ENCODE measurements at regions of chr2 and their contacts with region 1.

Region 1: DNA sequence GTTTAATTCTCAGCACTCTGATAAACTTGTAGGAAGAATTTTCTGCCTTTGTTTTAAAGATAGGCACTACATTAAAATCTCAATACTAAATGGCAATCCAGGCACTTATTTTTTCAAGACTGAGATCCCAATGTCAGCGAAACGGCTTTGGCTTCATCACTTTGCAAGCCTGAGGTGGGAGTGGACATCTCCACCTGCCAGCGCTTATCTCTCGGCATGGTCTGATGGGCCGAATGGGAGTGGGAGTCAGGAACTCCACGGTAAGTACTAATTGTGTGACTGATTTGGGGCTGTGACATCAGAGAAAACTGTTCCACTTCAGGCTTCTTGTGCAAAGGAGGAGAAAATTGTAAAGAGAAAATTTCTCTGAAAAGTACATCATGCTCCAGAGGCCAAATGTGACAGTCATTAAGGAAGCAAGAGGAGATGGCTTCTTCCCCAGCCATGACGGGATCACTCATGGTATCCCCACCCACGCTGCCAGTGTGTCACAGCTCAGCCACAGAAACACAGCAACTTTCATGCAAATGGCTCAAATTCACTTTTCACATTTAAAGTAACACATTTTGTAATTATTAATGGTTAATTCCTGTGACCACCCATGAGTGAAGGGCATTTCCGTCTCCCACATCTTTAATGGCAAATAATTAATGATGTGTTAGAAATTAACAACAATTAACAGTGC is 385.5 kb upstream of the HNRNPA3 start:
- DNase-seq: no peak
- ATAC-seq: no peak
- H3K4me3 ChIP-seq: no peak overlapping the region
- H3K27ac ChIP-seq: no peak overlapping the region
- H3K4me1 ChIP-seq: no peaks in the 10 kb centered on the region
- H3K27me3 ChIP-seq: no peaks in the 10 kb centered on the region
- CTCF ChIP-seq: no peak
- POLR2A ChIP-seq: no peak
- RAD21 ChIP-seq: no peak

Region 2: DNA sequence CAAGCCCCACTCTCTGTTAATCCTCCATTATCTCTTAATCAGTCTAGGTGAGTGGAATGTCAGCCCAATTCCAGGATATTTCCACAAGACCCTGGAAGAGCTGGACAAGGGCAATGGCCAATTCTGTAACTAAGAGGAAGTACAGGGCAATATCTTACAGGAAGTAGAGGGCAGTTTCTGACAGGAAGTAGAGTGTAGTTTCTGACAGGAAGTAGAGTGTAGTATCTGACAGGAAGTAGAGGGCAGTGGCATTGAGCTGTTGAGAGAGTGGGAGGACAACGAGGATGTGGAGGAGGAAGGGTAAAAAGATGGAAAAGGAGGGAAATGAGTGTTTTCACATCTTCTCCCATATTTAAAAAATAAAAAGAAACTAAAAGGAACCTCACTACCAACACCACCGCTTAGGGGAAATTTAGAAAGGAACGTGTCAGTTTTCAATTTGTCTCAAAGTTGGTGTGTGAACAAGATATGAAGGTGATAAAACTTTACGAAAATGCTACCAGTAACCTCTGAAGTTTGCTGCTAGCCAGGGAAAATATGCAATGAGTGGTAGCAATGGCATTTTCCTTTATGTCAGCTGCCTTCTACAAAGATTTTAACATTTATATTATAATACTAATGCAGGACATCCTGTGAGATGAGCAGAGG is 45.4 kb before region 1 on chr2:
- CTCF ChIA-PET with region 1: no interaction called
- POLR2A ChIA-PET with region 1: no interaction called
- dilution Hi-C with region 1: no loop called
- in situ Hi-C with region 1: no loop called
- intact Hi-C with region 1: no loop called
- DNase-seq: no peak
- ATAC-seq: no peak
- H3K4me3 ChIP-seq: no peak overlapping the region
- H3K27ac ChIP-seq: no peak overlapping the region
- H3K4me1 ChIP-seq: no peaks in the 10 kb centered on the region
- H3K27me3 ChIP-seq: no peaks in the 10 kb centered on the region
- CTCF ChIP-seq: no peak
- POLR2A ChIP-seq: no peak
- RAD21 ChIP-seq: no peak

Region 3: DNA sequence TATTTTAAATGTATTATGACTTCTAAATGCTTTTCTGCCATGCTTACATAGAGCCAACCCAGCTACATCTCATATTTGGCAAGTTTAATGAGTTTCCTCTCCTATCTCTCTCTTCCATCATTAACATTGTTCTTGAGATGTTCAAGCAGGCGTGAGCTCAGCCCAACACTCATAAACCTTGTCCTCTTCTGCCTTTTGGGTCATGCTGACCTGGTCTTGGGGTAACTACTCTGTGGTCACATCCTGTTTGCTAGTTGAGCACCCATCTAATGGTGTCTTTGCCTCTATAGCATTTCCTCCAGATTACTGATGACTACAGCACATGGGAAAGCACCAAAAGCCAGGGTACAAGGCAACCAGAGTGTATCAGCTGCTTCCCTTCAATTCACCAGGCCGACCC is 18.6 kb after region 1 on chr2:
- CTCF ChIA-PET with region 1: no interaction called
- POLR2A ChIA-PET with region 1: no interaction called
- dilution Hi-C with region 1: no loop called
- in situ Hi-C with region 1: no loop called
- intact Hi-C with region 1: loop called (anchors 2 kb)
- DNase-seq: no peak
- ATAC-seq: no peak
- H3K4me3 ChIP-seq: no peak overlapping the region
- H3K27ac ChIP-seq: no peak overlapping the region
- H3K4me1 ChIP-seq: no peaks in the 10 kb centered on the region
- H3K27me3 ChIP-seq: no peaks in the 10 kb centered on the region
- CTCF ChIP-seq: no peak
- POLR2A ChIP-seq: no peak
- RAD21 ChIP-seq: no peak

Region 4: DNA sequence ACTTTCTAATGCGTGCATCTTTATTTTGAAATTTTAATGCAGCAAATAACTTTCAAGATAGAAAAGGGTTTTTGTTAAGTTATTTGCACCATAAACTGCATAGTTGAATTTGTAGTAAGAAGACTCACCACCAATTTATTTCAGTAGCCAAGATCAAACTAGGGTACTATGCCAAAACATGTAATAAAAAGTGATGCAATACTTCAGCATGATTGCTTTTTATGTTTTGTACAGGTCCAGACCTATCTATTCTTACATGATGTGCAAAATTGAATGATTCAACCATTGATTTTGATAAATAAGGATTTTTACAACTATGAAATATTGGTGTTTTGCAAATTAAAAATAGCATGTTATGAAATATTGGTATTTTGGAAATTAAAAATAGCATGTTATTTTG is 592.1 kb after region 1 on chr2:
- CTCF ChIA-PET with region 1: no interaction called
- POLR2A ChIA-PET with region 1: no interaction called
- dilution Hi-C with region 1: no loop called
- in situ Hi-C with region 1: no loop called
- intact Hi-C with region 1: no loop called
- DNase-seq: peak; percentile 61
- ATAC-seq: no peak
- H3K4me3 ChIP-seq: no peak overlapping the region
- H3K27ac ChIP-seq: no peak overlapping the region
- H3K4me1 ChIP-seq: no peaks in the 10 kb centered on the region
- H3K27me3 ChIP-seq: no peaks in the 10 kb centered on the region
- CTCF ChIP-seq: no peak
- POLR2A ChIP-seq: no peak
- RAD21 ChIP-seq: no peak

Measured in IMR-90 (cell line).